ENCODE measurements at regions of chr4 and their contacts with region 1.

Region 1: GRCh38 chr4:113761620-113762185 is at the start of gene CAMK2D:
- DNase-seq: peak; percentile 89
- H3K4me3 Mint-ChIP-seq: peak within 1 kb of the TSS; percentile 99
- H3K27ac Mint-ChIP-seq: peak within 1 kb of the TSS; percentile 96
- H3K4me1 Mint-ChIP-seq: peaks cover 13% of the 10 kb centered on the region
- H3K27me3 Mint-ChIP-seq: no peaks in the 10 kb centered on the region
- CTCF ChIP-seq: no peak
- total RNA-seq, gene CAMK2D: 32.1 and 55.1 TPM in 2 replicates

Region 2: DNA sequence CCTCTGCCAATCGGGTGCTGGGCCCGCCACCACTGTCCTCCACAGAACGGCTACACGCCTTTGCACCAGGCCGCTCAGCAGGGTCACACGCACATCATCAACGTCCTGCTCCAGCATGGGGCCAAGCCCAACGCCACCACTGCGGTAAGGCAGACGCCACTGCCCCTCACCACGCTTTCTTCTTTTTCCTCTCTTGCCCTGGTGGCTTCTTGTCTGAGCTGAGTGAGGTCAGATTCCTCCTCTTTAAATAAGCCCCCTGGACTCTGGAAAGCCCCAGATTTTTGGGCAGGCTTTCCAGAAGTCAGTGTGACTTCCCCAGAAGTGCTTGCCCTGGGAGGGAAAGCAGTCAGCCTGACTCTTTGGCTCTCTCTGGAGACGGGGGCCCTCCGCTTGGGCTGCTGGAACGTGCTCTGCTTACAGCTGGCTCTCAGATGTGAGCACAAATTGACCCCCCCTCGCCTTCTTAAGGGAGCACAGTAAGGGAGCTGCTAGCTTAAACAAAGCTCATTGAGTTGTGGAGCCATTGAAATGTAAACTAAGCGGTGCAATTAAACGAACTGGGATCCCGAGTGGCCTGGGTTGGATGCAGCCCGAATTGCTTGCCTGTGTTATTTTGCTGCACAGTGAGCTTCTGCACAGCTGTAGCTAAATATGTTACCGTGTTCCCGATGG is 469.2 kb before region 1 on chr4:
- CTCF ChIA-PET with region 1: no interaction called
- POLR2A ChIA-PET with region 1: no interaction called
- intact Hi-C with region 1: loop called (anchors 1 kb)
- DNase-seq: no peak
- H3K4me3 Mint-ChIP-seq: no peak overlapping the region
- H3K27ac Mint-ChIP-seq: no peak overlapping the region
- H3K4me1 Mint-ChIP-seq: no peaks in the 10 kb centered on the region
- H3K27me3 Mint-ChIP-seq: no peaks in the 10 kb centered on the region
- CTCF ChIP-seq: no peak

Region 3: GRCh38 chr4:113445286-113445685 is 316.4 kb before region 1 on chr4:
- CTCF ChIA-PET with region 1: interaction called, 4 read pairs
- POLR2A ChIA-PET with region 1: interaction called, 5 read pairs
- intact Hi-C with region 1: loop called (anchors 2 kb)
- DNase-seq: peak; percentile 99
- H3K4me3 Mint-ChIP-seq: peak overlapping the region; percentile 60
- H3K27ac Mint-ChIP-seq: no peak overlapping the region
- H3K4me1 Mint-ChIP-seq: peaks cover 35% of the 10 kb centered on the region
- H3K27me3 Mint-ChIP-seq: no peaks in the 10 kb centered on the region
- CTCF ChIP-seq: no peak

Region 4: GRCh38 chr4:113547487-113548042 is 214.1 kb before region 1 on chr4:
- CTCF ChIA-PET with region 1: interaction called, 6 read pairs
- POLR2A ChIA-PET with region 1: interaction called, 17 read pairs
- intact Hi-C with region 1: loop called (anchors 1 kb)
- DNase-seq: peak; percentile 97
- H3K4me3 Mint-ChIP-seq: no peak overlapping the region
- H3K27ac Mint-ChIP-seq: no peak overlapping the region
- H3K4me1 Mint-ChIP-seq: peaks cover 8% of the 10 kb centered on the region
- H3K27me3 Mint-ChIP-seq: no peaks in the 10 kb centered on the region
- CTCF ChIP-seq: peak; percentile 93

Region 5: DNA sequence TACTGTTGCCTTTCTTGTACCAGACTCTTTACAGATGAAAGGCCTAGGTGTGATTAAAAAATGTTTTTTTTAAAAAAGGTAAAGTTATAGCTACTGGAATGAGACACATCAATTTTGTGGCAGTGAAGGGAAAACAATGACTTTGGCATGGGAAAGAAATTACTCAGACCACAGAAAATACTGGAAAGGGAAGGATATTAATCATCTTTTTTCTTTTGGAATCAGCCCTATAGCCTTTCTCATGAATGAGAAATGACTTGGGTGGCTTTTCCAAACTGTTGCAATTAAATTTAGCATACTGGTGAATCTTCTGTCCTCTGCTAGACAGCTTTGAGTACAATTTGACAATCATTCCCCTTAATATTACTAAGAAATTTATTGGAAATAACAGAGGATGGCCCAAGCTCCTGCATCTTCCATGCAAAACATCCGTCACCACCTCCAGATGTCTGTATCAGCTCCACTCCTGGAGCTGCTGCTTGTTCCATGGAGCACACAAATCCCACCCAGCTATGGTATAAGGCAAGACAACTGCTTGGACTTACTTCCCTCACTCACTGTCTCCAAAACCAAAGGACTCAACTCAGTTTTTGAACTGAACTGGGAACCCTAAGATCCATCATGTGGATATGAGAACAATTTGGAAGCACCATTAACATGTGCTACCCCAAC is 315.3 kb after region 1 on chr4:
- CTCF ChIA-PET with region 1: no interaction called
- POLR2A ChIA-PET with region 1: interaction called, 4 read pairs
- intact Hi-C with region 1: loop called (anchors 5 kb)
- DNase-seq: peak; percentile 22
- H3K4me3 Mint-ChIP-seq: no peak overlapping the region
- H3K27ac Mint-ChIP-seq: peak overlapping the region; percentile 23
- H3K4me1 Mint-ChIP-seq: peaks cover 9% of the 10 kb centered on the region
- H3K27me3 Mint-ChIP-seq: no peaks in the 10 kb centered on the region
- CTCF ChIP-seq: no peak

Region 6: GRCh38 chr4:114180481-114180880 is 418.8 kb after region 1 on chr4:
- CTCF ChIA-PET with region 1: no interaction called
- POLR2A ChIA-PET with region 1: no interaction called
- intact Hi-C with region 1: no loop called
- DNase-seq: peak; percentile 1
- H3K4me3 Mint-ChIP-seq: no peak overlapping the region
- H3K27ac Mint-ChIP-seq: no peak overlapping the region
- H3K4me1 Mint-ChIP-seq: no peaks in the 10 kb centered on the region
- H3K27me3 Mint-ChIP-seq: no peaks in the 10 kb centered on the region
- CTCF ChIP-seq: no peak